ENCODE measurements at regions of chr20 and their contacts with region 1.

Region 1: DNA sequence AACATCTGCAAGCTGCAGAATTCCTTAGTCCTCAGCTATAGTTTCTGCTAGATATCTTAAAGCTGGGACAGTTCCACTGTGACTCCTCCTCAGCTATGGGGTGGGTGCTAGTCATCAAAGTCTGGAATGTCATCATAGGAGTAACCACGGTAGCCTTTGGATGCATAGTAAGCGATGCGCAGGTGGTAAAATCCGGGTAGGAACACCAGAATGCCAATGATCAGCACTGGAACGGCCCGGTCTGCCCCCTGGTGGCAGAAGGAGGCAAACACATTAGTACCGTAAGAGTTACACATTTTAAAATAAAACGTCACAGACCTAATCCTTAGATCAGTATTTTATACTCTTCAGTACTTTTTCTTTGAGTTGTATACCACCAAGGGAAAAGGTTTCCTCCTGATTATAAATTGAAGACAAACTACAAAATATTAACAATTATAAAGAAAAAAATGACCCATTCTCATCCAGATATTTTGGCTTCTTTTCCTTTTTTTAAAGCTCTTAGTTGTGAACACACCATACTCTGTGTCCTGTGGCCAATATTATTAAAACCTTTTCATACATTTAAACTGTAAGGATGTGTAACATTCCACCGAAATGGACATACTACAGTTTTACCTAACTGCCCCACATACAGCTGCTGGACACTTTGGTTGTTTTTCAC is 18.9 kb downstream of the PCNA start:
- DNase-seq: peak; percentile 66
- ATAC-seq: peak; percentile 96
- H3K4me3 ChIP-seq: no peak overlapping the region
- H3K27ac ChIP-seq: no peak overlapping the region
- H3K4me1 ChIP-seq: no peaks in the 10 kb centered on the region
- H3K27me3 ChIP-seq: no peaks in the 10 kb centered on the region
- CTCF ChIP-seq: peak; percentile 84
- POLR2A ChIP-seq: no peak
- RAD21 ChIP-seq: peak; percentile 85

Region 2: DNA sequence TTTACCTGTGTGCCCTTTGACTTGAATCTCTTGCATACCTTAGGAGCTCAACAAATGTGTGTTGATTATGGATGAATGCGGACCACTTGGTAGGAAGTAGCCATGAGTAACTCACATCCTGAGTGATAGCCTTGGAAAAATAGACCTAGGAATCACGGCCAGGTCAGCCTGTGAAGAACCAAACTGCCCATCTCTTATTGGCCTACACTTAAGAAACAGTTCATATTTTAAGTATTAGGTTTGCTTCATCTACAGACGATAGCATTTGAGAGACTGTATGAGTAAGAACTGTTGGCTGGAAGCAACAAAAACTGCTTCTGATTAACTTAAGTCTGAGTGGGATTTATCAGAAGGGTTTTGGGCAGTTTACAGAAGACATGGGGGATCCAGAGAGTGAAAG is 699.2 kb before region 1 on chr20:
- CTCF ChIA-PET with region 1: no interaction called
- POLR2A ChIA-PET with region 1: no interaction called
- dilution Hi-C with region 1: no loop called
- in situ Hi-C with region 1: no loop called
- intact Hi-C with region 1: no loop called
- DNase-seq: peak; percentile 68
- ATAC-seq: 0 out of 2 replicates have a peak, but pooled peaks have one; percentile 32
- H3K4me3 ChIP-seq: no peak overlapping the region
- H3K27ac ChIP-seq: no peak overlapping the region
- H3K4me1 ChIP-seq: 0 out of 2 replicates have a peak, but pooled peaks cover 1% of the 10 kb centered on the region
- H3K27me3 ChIP-seq: peaks cover 5% of the 10 kb centered on the region; the same call in 1 of the 2 replicates
- CTCF ChIP-seq: no peak
- POLR2A ChIP-seq: no peak
- RAD21 ChIP-seq: no peak

Region 3: GRCh38 chr20:4740774-4741431 is 359.9 kb before region 1 on chr20:
- CTCF ChIA-PET with region 1: interaction called, 3 read pairs
- POLR2A ChIA-PET with region 1: no interaction called
- dilution Hi-C with region 1: no loop called
- in situ Hi-C with region 1: no loop called
- intact Hi-C with region 1: loop called (anchors 5 kb)
- DNase-seq: peak; percentile 38
- ATAC-seq: peak; percentile 87
- H3K4me3 ChIP-seq: no peak overlapping the region
- H3K27ac ChIP-seq: no peak overlapping the region
- H3K4me1 ChIP-seq: no peaks in the 10 kb centered on the region
- H3K27me3 ChIP-seq: peaks cover 25% of the 10 kb centered on the region
- CTCF ChIP-seq: peak; percentile 61
- POLR2A ChIP-seq: no peak
- RAD21 ChIP-seq: peak; percentile 48

Region 4: GRCh38 chr20:4956200-4956810 is 144.5 kb before region 1 on chr20:
- CTCF ChIA-PET with region 1: interaction called, 6 read pairs
- POLR2A ChIA-PET with region 1: no interaction called
- dilution Hi-C with region 1: no loop called
- in situ Hi-C with region 1: no loop called
- intact Hi-C with region 1: loop called (anchors 1 kb)
- DNase-seq: peak; percentile 75
- ATAC-seq: no peak
- H3K4me3 ChIP-seq: no peak overlapping the region
- H3K27ac ChIP-seq: no peak overlapping the region
- H3K4me1 ChIP-seq: peaks cover 15% of the 10 kb centered on the region
- H3K27me3 ChIP-seq: no peaks in the 10 kb centered on the region
- CTCF ChIP-seq: peak; percentile 92
- POLR2A ChIP-seq: no peak
- RAD21 ChIP-seq: peak; percentile 87

Region 5: DNA sequence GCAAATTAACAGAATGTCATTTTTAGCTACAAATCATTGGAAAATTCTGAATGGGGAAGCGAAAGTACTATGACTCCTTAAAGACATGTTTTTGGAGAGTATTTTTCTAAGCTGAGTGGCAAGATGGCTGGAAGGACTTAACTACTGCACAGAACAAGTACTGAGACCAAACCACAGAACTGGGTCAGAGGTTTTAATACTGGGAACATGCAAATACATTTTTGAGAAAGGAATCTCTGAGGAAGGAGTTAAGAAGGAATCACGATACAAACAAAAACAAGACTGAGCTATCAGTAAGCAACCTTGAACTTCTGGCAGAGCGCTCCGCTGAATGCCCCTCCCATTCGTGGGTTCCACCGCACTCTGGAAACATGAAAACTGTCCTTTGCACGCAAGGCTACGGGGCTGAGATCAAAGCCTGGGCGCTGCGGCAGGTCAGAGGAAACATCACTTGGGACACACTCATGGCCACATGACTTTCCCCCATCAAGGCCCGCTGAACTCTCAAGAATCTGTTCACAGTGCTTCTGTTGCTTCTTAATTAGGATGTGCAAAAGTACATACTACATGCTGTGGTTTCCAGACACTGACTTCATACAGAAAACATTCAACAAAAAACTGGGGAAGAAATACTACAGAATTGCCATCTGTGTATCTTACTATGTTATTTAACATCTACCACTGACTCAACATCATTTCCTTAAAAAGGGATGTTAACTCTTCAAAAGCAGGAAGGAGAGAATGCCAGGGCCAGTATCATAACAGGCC is 127.3 kb before region 1 on chr20:
- CTCF ChIA-PET with region 1: interaction called, 4 read pairs
- POLR2A ChIA-PET with region 1: no interaction called
- dilution Hi-C with region 1: no loop called
- in situ Hi-C with region 1: no loop called
- intact Hi-C with region 1: loop called (anchors 5 kb)
- DNase-seq: peak; percentile 90
- ATAC-seq: peak; percentile 84
- H3K4me3 ChIP-seq: peak overlapping the region; percentile 34
- H3K27ac ChIP-seq: peak overlapping the region; percentile 94
- H3K4me1 ChIP-seq: peaks cover 2% of the 10 kb centered on the region; the same call in 1 of the 2 replicates
- H3K27me3 ChIP-seq: no peaks in the 10 kb centered on the region
- CTCF ChIP-seq: no peak
- POLR2A ChIP-seq: no peak
- RAD21 ChIP-seq: no peak; the same call in 1 of the 2 replicates

Measured in IMR-90 (cell line).